Mammary epithelial cell (primary cell): ENCODE measurements at regions of chr10 and their contacts with region 1.

Region 1: DNA sequence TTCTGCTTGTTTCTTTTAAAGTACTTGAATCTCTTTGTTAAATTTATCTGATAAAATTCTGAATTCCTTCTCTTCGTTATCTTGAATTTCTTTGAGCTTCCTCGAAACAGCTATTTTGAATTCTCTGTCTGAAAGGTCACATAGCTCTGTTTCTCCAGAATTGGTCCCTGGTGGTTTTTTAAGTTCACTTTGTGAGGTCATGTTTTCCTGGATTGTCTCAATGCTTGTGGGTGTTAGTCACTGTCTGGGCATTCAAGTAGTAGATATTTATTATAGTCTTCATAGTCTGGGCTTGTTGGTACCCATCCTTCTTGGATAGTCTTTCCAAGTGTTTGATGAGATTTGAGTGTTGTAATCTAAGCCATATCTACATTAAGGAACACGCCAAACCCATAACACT is 1060.6 kb downstream of the LRMDA start:
- DNase-seq: peak; percentile 93
- H3K4me3 ChIP-seq: no peak overlapping the region
- H3K27ac ChIP-seq: peak overlapping the region; percentile 65
- H3K4me1 ChIP-seq: peaks cover 22% of the 10 kb centered on the region
- H3K27me3 ChIP-seq: no peaks in the 10 kb centered on the region
- CTCF ChIP-seq: no peak

Region 2: GRCh38 chr10:76432274-76433012 is 59.6 kb before region 1 on chr10:
- CTCF ChIA-PET with region 1: no interaction called
- dilution Hi-C with region 1: no loop called
- in situ Hi-C with region 1: no loop called
- intact Hi-C with region 1: loop called (anchors 5 kb)
- DNase-seq: peak; percentile 74
- H3K4me3 ChIP-seq: no peak overlapping the region
- H3K27ac ChIP-seq: peak overlapping the region; percentile 15
- H3K4me1 ChIP-seq: peaks cover 27% of the 10 kb centered on the region
- H3K27me3 ChIP-seq: no peaks in the 10 kb centered on the region
- CTCF ChIP-seq: no peak

Region 3: GRCh38 chr10:76885816-76886215 is 393.8 kb after region 1 on chr10:
- CTCF ChIA-PET with region 1: no interaction called
- dilution Hi-C with region 1: no loop called
- in situ Hi-C with region 1: no loop called
- intact Hi-C with region 1: no loop called
- DNase-seq: no peak
- H3K4me3 ChIP-seq: no peak overlapping the region
- H3K27ac ChIP-seq: no peak overlapping the region
- H3K4me1 ChIP-seq: no peaks in the 10 kb centered on the region
- H3K27me3 ChIP-seq: no peaks in the 10 kb centered on the region
- CTCF ChIP-seq: no peak